Activated B cell treated with CpG ODN at 0.5 μM for 24 hours (primary cell): ENCODE measurements at regions of chr1 and their contacts with region 1.

Region 1: DNA sequence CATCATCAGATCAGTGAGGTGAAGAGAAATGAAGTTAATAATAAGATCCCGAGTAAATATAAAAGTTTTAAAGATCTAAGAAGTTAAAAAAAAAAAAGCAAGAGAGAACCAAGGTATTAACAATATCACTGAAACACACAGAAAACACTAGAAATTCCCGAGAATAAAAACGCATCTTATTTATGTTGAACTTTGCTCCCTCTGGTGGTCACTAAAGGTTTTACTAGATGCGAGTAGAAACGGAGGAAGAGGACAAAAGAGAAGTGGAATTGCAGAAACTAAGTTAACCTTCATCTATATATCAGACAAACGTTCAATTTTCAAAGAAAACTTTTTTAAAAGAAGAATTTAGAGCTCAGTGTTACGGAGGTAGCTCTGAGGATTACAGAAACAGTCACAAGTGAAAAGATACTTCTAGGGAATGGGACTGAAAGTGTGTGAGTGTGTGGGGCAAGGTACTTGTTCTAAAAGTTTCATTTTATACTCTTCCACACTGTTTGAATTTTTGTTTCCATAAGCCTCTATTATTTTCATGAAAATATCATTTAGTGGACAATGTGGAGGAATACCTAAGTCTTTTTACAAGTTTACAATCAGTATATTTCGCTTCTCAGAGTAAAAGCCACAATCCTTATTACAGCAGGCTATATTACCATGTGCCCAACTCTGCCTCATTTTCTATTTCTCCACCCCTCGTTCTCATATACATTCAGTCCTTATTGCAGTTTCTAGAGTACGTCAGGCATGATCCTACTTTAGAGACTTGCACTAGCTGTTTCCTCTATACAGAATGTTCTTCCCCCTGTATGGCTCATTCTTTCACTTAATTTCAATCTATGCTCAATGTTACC is 19.7 kb downstream of the ACBD6 start:
- DNase-seq: no peak
- ATAC-seq: peak; percentile 56
- H3K4me3 Mint-ChIP-seq: no peak overlapping the region
- H3K27ac Mint-ChIP-seq: no peak overlapping the region
- H3K4me1 Mint-ChIP-seq: peaks cover 8% of the 10 kb centered on the region
- H3K27me3 Mint-ChIP-seq: no peaks in the 10 kb centered on the region
- CTCF ChIP-seq: peak; percentile 82

Region 2: GRCh38 chr1:179706339-179706941 is 776.2 kb before region 1 on chr1:
- CTCF ChIA-PET with region 1: interaction called, 8 read pairs
- POLR2A ChIA-PET with region 1: no interaction called
- intact Hi-C with region 1: loop called (anchors 1 kb)
- DNase-seq: no peak
- ATAC-seq: no peak
- H3K4me3 Mint-ChIP-seq: no peak overlapping the region
- H3K27ac Mint-ChIP-seq: no peak overlapping the region
- H3K4me1 Mint-ChIP-seq: peaks cover 4% of the 10 kb centered on the region
- H3K27me3 Mint-ChIP-seq: peaks cover 7% of the 10 kb centered on the region
- CTCF ChIP-seq: no peak

Region 3: GRCh38 chr1:179867807-179868330 is 614.8 kb before region 1 on chr1:
- CTCF ChIA-PET with region 1: no interaction called
- POLR2A ChIA-PET with region 1: no interaction called
- intact Hi-C with region 1: loop called (anchors 1 kb)
- DNase-seq: peak; percentile 34
- ATAC-seq: peak; percentile 71
- H3K4me3 Mint-ChIP-seq: no peak overlapping the region
- H3K27ac Mint-ChIP-seq: no peak overlapping the region
- H3K4me1 Mint-ChIP-seq: peaks cover 18% of the 10 kb centered on the region
- H3K27me3 Mint-ChIP-seq: no peaks in the 10 kb centered on the region
- CTCF ChIP-seq: peak; percentile 50

Region 4: DNA sequence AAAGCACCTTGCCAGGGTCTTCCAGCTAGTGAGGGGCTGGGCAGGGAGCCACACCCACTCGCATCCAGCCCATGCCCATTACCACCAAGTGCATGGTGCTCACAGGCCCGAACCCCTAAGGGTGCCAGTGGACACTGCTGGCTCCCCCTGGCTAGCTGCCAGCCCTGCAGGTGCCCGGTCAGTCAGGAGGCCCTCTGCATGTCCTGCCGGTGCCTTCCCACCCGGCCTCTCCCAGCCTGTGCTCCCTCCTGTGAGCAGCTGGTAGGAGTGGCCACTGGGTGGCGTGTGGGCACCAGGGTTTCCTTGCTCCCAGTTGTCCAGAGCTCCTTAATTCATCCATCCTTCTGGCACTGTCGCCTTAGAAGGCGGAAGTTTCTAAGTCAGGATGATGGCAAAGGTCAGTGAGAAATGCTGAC is 294.6 kb before region 1 on chr1:
- CTCF ChIA-PET with region 1: interaction called, 3 read pairs
- POLR2A ChIA-PET with region 1: no interaction called
- intact Hi-C with region 1: loop called (anchors 2 kb)
- DNase-seq: no peak
- ATAC-seq: no peak
- H3K4me3 Mint-ChIP-seq: no peak overlapping the region
- H3K27ac Mint-ChIP-seq: no peak overlapping the region
- H3K4me1 Mint-ChIP-seq: no peaks in the 10 kb centered on the region
- H3K27me3 Mint-ChIP-seq: no peaks in the 10 kb centered on the region
- CTCF ChIP-seq: no peak

Region 5: GRCh38 chr1:180252638-180253536 is 229.8 kb before region 1 on chr1:
- CTCF ChIA-PET with region 1: interaction called, 5 read pairs
- POLR2A ChIA-PET with region 1: no interaction called
- intact Hi-C with region 1: loop called (anchors 1 kb)
- DNase-seq: peak; percentile 33
- ATAC-seq: peak; percentile 40
- H3K4me3 Mint-ChIP-seq: no peak overlapping the region
- H3K27ac Mint-ChIP-seq: no peak overlapping the region
- H3K4me1 Mint-ChIP-seq: no peaks in the 10 kb centered on the region
- H3K27me3 Mint-ChIP-seq: peaks cover 47% of the 10 kb centered on the region
- CTCF ChIP-seq: no peak

Region 6: GRCh38 chr1:180365039-180365438 is 117.6 kb before region 1 on chr1:
- CTCF ChIA-PET with region 1: no interaction called
- POLR2A ChIA-PET with region 1: no interaction called
- intact Hi-C with region 1: loop called (anchors 2 kb)
- DNase-seq: no peak
- ATAC-seq: no peak
- H3K4me3 Mint-ChIP-seq: no peak overlapping the region
- H3K27ac Mint-ChIP-seq: no peak overlapping the region
- H3K4me1 Mint-ChIP-seq: no peaks in the 10 kb centered on the region
- H3K27me3 Mint-ChIP-seq: no peaks in the 10 kb centered on the region
- CTCF ChIP-seq: no peak

Region 7: GRCh38 chr1:180745098-180745497 is 262.4 kb after region 1 on chr1:
- CTCF ChIA-PET with region 1: no interaction called
- POLR2A ChIA-PET with region 1: no interaction called
- intact Hi-C with region 1: no loop called
- DNase-seq: no peak
- ATAC-seq: no peak
- H3K4me3 Mint-ChIP-seq: no peak overlapping the region
- H3K27ac Mint-ChIP-seq: no peak overlapping the region
- H3K4me1 Mint-ChIP-seq: no peaks in the 10 kb centered on the region
- H3K27me3 Mint-ChIP-seq: no peaks in the 10 kb centered on the region
- CTCF ChIP-seq: no peak